ENCODE measurements at regions of chr6 and their contacts with region 1.

Region 1: DNA sequence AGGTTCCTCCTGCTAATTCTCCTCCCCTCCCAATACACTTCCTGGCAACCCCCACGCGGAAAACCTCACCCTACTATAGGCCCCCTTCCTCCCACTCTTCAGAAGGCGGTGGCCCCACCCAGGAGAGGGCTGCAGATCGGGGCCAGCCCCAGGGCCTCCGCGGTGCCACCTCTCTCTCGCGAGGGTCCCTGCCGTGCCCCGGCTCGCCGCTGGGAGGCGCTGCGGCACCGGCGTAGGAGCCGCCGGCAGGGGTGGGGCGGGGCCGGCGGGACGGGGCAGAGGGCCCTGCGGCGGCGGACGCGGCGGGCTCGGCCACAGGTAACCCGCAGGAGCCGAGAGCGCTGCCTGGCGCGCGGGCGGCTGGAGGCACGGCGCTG is at the start of gene ANKRD6:
- DNase-seq: peak; percentile 62
- total RNA-seq, gene ANKRD6: 19.3 and 28.1 TPM in 2 replicates

Region 2: DNA sequence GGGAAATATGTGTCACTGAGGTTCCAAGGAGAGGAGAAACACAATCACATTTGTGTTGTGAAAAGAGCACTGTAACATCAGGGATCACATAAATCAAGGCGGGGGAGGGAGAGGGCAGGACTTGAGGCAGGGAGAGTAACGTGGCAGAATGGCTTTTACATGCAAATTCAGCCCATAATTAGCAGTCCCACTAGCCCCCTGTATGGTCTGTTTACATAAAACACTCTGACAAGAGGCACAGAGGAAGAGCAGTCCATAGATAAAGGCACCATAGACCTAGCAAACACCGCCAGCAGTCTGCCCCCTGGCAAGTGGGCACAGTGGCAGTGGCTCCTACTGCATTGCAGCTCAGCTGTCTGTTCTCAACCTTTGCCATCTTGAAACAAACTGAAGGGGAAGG is 122.9 kb after region 1 on chr6:
- in situ Hi-C with region 1: no loop called
- DNase-seq: no peak

Region 3: DNA sequence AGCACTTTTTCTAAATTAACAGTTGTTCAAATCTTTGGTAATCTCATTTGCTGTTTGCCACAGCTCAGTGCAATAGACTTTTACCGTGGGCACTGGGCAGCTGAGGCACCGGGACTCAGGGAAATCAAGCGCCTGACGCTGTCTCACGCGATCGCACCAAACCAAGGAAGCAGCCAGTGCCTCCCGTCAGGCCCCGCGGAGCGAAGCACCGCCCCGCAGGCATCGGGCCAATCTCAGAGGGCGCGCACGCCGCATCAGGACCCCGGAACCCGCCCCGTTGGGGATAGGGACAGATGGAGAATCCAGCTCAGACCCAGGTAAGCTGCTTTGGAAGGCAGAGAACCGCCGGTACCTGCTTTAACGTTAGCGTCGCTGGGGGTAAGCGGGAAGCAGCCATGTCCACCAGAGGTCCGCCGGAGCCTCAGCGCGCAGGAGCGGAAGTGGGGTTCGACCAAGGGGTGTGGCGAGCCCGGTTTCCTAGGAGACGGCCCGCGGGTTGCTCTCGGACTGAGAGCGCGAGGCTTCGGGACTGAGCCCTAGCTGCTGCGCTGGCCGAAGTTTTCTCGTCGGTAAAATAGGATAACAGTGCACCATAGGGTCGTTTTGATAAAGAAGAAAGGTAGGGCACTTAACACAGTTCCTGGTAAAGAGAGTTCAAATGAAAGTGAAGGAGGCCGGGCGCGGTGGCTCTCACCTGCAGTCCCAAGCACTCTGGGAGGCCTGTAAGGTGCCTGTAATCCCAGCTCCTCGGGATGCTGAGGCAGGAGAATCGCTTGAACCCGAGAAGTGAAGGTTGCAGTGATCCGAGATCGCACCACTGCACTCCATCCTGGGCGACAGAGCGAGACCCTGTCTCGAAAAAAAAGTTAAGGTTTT is 205.7 kb after region 1 on chr6 and contains the start of gene LYRM2:
- in situ Hi-C with region 1: loop called (anchors 25 kb)
- DNase-seq: peak; percentile 92
- total RNA-seq, gene LYRM2: 35.2 and 35.4 TPM in 2 replicates

Measured in SK-MEL-5 (cell line).